ENCODE measurements at regions of chr9 and their contacts with region 1.

Region 1: DNA sequence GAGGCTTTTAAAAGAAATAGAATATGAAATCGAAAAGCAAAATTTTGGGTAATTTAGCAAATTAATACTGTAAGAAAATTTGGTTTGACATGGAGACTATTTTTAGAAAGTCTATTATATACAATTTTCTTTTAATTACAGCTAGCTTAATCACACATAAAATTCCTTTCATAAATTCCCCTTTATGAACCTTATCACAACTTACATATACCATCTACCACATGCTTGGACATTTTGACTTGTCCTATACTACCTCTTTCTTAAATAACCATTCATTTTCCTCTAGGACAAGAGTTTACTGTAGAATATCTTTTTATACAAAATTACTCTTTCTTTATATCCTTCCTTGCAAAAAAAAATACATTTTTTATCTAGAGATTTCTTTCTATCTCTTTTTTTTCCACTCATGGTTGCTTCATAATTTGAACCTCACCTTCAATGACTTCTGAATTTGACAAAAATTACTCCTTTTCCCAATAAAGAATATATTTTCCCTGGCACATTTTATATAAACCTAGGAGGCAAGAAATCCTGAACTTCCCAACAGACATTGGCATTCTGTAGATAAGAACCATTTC is 34.0 kb upstream of the SYK start:
- DNase-seq: no peak
- H3K4me3 ChIP-seq: no peak overlapping the region
- CTCF ChIP-seq: no peak
- POLR2A ChIP-seq: no peak

Region 2: DNA sequence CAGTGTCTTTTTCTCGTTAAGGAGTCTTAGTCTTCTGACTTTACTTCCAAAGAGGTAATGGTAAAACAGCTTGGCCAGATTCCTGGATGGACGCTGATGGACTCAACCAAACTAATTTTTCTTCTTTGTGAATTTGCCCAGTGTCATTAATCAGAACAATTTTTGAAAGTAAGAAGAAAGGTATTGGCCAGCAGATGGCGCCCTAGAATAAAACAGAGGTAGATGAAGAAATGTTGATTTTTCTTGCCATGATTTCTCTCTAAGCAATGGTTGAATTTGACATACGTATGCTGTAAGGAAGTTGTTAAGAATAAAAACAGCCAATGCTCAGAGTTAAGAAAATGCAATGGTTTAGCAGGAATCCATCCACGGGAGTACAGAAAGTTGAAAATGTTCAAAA is 625.0 kb before region 1 on chr9:
- intact Hi-C with region 1: loop called (anchors 5 kb)
- DNase-seq: peak in 1 of 2 donors; percentile 49
- H3K4me3 ChIP-seq: no peak overlapping the region
- CTCF ChIP-seq: no peak
- POLR2A ChIP-seq: no peak

Region 3: DNA sequence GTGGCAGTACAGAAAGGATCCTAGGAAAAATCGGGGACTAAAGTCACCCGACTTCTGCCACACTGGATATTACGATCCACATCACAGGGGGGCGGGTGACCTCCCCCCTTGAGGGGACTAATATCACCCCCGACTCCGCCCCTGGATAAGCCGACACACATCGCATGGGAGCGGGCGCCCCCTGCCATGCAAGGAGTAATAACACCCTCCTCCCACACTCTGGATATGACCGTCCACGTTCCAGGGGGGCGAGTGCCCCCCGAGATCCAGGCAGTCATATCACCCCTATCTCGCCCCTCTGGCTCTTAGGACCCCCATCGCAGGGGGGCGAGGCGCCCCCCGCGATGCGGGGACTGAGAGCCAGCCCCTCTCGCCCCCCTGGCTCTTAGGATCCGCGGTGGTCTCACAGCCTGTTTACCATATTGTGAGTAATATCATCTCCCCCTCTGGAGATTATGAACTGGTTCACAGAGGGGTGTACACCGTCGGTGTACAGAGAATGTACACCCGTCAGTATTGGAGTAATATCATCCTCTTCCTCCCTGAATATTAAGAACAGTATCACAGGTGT is 548.0 kb before region 1 on chr9:
- intact Hi-C with region 1: loop called (anchors 10 kb)
- DNase-seq: no peak
- H3K4me3 ChIP-seq: no peak overlapping the region
- CTCF ChIP-seq: no peak
- POLR2A ChIP-seq: no peak